BJ (cell line): ENCODE measurements at regions of chr1 and their contacts with region 1.

Region 1: DNA sequence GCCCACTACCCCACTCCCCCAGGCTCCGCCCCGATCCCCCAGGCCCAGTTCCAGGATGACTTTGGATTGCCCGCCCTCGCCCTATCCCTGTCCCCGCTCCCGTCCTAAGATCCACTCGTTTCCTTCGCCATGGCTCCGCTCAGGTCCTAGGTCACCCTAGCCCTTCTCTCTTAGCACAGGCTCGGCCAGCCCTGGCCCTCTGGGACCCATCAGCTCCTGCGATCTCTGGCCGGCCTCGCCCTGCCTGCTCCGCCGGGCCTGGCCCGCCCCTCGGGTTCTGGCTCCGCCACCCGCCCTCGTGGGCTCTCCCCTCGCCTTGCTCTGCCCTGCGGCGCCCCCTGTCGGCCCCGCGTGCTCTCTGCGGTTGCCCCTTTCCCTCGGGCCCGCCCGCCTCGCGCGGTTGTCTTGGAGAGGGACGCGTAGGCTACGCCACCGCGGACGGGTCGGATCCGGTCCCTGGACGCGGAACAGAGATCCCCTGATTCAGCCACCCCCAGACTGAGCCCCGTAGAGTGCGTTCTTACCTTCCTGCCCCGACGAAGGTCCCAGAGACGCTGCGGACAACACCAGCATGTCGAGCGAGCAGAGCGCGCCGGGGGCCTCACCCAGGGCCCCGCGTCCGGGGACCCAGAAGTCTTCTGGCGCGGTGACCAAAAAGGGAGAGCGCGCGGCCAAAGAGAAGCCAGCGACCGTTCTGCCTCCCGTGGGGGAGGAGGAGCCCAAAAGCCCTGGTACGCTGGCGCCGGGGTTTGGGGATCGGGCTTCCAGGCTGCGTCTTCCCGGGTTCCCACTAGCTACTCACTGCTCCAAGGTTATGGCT is at the start of gene LRRC71:
- DNase-seq: no peak
- H3K4me3 ChIP-seq: no peak within 1 kb of the TSS
- H3K27me3 ChIP-seq: peaks cover 20% of the 10 kb centered on the region
- CTCF ChIP-seq: peak; percentile 84
- polyA plus RNA-seq, gene LRRC71: 0.75 and 1.2 TPM in 2 replicates

Region 2: DNA sequence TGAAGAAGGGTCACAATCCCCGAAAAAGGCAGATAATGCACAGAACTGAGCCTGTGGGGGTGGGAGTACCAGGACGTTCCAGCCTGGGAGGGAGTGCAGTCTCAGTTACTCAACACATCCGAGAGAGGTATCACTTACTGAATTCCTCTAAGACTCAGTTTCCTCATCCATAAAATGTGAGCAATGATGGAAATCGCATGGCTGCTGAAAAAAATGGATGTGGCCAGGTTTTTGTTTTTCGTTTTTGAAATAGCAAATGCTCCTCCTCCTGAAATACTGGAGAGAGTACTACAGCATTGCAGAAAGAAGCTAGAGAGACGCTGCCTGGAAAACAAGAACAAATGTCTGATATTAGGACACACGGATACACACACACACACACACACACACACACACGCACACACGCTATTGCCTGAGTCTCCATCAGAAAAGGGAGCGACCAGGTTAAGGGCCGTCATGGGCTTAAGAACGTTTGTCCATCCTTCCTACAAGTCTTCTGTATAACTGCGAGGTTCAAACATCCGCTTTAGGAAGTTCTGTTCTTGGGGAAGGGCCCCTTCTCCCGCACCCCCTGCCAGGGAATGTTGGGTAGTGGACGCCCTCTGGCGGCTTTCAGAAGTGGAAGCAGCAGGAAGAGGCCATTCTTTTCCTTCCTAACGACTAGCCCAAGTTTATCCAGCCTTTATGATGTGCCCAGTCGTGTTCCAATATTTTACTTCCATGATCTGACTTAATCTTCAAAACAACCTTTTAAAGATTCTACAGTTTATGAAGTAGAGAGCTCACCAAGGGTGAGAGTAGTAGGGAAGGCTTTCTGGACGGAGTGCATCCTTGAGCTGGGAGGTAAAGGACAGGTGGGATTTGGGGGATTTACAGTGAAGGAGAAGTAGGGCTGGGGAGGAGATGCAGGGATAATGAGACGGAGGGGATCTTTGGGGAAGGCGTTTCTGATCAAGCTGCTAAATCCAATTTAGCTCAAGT is 242.5 kb before region 1 on chr1:
- CTCF ChIA-PET with region 1: no interaction called
- POLR2A ChIA-PET with region 1: no interaction called
- DNase-seq: no peak
- H3K4me3 ChIP-seq: peak overlapping the region; percentile 55
- H3K27me3 ChIP-seq: no peaks in the 10 kb centered on the region
- CTCF ChIP-seq: peak; percentile 93

Region 3: DNA sequence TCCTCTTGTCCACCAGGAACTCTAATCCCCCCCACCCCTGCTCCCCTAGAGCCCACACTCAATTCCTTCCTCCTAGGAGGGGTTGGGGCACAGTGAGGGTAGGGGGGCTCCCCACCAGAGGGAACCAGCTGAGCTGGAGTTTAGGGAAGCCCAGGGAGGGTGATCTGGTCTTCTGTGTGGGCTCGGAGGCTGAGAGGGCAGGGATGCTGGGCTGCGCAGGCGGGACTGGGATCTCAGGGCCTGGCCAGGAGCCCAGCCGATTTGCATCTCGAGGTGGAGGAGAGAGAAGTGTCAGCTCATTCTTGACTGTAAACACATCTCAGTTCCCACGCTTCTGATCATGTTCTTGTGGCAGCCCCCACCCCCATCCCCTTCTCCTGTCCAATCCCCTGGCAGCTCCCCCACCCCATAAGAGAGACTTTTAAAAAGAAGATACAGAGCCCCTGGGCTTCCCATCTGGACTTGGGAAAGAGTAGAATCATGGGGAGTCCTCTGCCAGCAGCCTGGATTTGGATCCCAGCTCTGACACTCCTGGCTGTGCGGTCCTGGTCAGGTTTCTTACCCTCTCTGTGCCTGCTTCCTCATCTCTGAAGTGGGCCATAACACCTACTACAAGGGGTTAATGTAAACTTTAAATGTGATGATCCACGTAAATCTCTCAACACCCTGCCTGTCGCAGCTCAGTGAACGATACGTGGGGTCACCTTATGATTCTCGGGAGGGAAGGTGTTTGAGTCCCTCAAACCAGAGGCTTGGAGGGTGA is 20.3 kb before region 1 on chr1:
- CTCF ChIA-PET with region 1: interaction called, 298 read pairs
- POLR2A ChIA-PET with region 1: no interaction called
- DNase-seq: no peak
- H3K4me3 ChIP-seq: no peak overlapping the region
- H3K27me3 ChIP-seq: no peaks in the 10 kb centered on the region
- CTCF ChIP-seq: no peak